Mammary epithelial cell (primary cell): ENCODE measurements at regions of chr10 and their contacts with region 1.

Region 1: DNA sequence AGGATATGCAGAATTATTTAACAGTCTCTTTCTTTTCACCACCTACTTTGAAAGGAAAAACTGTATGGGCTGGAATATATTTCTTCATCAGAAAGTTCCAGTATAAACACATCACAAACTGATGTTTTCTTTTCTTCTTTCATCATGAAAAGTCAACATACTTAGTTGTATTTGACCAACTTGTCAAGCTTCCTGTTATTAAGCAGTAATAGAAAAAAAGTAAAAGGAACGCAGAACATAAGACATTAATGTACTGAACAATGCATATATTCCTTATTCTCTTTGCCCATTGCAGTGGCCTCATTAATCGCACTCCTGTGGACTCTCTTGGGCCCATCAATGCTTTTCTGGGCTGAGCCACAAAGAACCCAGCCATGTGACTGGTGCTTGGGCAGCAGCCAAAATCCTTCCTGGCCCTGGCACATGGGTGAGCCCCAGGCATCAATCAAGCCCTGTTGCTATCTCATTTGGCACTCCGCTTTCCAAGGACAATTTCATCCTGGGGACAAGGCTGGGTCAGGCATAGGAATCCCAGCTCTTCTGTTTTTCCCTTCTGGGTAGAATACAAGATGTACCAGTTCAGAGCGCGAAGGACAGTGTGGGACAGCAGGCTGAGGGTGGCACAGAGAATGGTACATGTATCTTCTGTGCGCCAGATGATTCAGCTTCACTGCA is 42.3 kb downstream of the RHOBTB1 start:
- DNase-seq: no peak
- H3K4me3 ChIP-seq: no peak overlapping the region
- H3K27ac ChIP-seq: no peak overlapping the region
- H3K4me1 ChIP-seq: no peaks in the 10 kb centered on the region
- H3K27me3 ChIP-seq: no peaks in the 10 kb centered on the region
- CTCF ChIP-seq: no peak

Region 2: DNA sequence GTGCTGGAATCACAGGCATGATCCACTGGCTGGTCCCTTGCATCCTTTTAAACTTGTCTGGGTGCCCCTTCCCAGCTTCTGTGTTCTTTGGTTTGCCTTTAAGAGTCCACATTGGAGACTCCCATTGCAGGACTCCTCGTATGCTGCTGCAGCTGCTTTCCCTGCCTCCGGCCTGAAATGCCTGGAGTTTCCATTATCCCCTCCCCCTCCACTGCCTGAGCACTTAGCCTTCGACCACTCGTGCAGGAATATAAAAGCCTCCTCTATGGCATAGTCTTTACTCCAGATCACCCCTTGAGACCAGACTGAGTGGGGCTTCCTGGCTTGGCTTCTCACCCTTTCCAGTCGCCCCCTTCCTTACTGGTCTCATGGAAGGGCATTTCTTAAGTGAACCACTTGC is 37.9 kb before region 1 on chr10:
- CTCF ChIA-PET with region 1: no interaction called
- dilution Hi-C with region 1: no loop called
- in situ Hi-C with region 1: no loop called
- intact Hi-C with region 1: no loop called
- DNase-seq: no peak
- H3K4me3 ChIP-seq: no peak overlapping the region
- H3K27ac ChIP-seq: no peak overlapping the region
- H3K4me1 ChIP-seq: no peaks in the 10 kb centered on the region
- H3K27me3 ChIP-seq: no peaks in the 10 kb centered on the region
- CTCF ChIP-seq: no peak

Region 3: DNA sequence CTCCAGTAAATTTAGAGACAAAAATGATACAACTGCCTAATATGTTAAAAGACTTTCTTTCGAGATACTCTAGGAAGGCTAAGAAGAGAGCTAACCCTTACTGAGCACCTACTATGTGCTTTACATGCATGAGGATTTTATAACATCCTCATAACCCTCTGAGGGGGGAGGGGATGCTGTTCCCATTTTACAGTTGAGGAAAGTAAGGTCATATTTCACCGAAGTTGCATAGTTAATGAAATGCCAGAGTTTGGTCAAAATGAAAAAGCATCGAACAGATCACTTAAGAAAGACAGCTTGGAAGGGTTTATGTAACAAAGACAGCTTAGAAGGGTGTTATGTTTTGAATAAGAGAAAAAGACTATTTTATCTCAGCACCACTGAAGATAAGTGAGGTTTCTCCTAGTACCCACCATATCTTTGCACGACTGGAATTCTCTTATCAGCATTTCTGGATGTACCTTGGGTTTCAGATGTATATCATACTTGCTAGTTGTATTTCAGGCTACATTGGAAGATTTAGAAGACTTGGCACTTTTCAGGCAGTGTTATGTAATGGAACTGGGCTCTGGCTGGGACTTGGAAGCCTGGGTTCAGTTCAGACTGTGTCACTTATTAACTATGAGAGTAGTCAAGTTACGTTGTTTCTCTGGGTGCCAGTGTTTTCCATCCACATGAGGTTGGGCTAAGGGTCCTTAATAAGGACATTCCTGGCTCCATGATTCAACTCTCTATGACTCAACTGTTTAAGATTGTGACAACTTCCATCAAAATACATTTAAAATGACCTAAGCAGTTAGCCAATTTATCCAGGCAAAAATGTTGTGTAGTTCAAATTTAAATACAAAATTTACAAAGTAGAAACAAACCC is 36.3 kb after region 1 on chr10:
- CTCF ChIA-PET with region 1: no interaction called
- dilution Hi-C with region 1: loop called (anchors 5 kb)
- in situ Hi-C with region 1: no loop called
- intact Hi-C with region 1: no loop called
- DNase-seq: no peak
- H3K4me3 ChIP-seq: no peak overlapping the region
- H3K27ac ChIP-seq: no peak overlapping the region
- H3K4me1 ChIP-seq: peaks cover 3% of the 10 kb centered on the region
- H3K27me3 ChIP-seq: no peaks in the 10 kb centered on the region
- CTCF ChIP-seq: no peak

Region 4: DNA sequence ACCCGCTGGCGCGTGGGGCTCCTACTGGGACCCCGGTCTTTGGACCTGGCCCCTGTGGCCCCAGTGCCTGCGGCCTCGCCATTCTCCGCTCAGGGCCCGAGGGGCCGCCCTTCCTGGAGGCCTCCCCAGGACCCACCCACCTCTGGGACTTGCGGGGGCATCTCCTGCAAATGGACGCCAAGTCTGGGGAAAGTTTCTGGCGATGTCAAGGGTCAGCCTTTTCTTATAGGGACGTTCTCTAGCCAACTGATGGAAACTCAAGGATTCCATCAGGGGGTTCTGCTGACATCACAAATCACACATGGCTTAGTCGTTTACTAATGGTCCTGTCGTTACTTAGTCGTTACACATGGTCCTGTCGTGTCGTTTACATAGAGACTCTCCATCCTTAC is 100.0 kb after region 1 on chr10:
- CTCF ChIA-PET with region 1: no interaction called
- dilution Hi-C with region 1: no loop called
- in situ Hi-C with region 1: no loop called
- intact Hi-C with region 1: no loop called
- DNase-seq: no peak
- H3K4me3 ChIP-seq: peak overlapping the region; percentile 31 to 48 (median 37)
- H3K27ac ChIP-seq: no peak overlapping the region
- H3K4me1 ChIP-seq: no peaks in the 10 kb centered on the region
- H3K27me3 ChIP-seq: peaks cover 4% of the 10 kb centered on the region
- CTCF ChIP-seq: no peak